Activated naive CD4-positive, alpha-beta T cell treated with anti-CD3 and anti-CD28 coated beads for 36 hours (primary cell): ENCODE measurements at regions of chr11 and their contacts with region 1.

Region 1: DNA sequence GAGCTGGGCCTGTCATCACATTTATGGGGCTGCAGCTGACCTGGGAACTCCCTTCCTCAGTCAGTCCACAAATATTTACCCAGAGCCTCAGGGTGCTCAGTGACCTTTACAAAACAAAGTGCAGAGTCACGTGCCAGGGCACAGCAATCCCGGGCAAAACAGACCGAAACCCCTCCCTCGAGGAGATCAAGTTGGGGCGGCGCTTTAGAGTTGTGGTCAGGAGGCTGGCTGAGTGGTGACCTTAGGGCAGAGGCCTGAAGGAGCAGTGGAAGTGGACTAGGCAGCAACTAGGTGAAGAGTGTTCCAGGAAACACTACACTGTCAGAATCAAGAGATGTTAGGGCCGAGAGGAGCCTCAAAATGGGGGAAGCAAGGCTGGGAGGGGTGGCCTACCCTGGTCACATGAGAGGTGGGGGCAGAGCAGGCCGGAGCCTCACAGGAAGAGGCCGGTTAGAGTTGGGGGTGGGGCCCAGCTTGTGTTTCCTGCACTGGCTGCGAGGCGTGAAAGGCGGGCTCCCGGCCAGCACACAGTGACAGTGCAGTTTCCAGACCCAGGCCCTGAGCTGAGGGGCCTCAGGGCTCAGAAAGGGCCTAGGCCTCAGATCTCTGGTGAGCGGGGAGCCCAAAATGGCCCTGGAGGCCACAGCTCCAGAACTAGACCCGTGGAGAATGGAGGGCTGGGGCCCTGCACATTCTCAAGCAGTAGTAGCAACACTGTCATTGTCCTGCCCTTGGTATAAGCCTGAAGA is 3.7 kb upstream of the NEAT1 start:
- DNase-seq: peak; percentile 97
- H3K4me3 Mint-ChIP-seq: peak overlapping the region; percentile 100
- H3K27ac Mint-ChIP-seq: peak overlapping the region; percentile 99
- H3K4me1 Mint-ChIP-seq: peaks cover 40% of the 10 kb centered on the region
- H3K27me3 Mint-ChIP-seq: peaks cover 10% of the 10 kb centered on the region

Region 2: DNA sequence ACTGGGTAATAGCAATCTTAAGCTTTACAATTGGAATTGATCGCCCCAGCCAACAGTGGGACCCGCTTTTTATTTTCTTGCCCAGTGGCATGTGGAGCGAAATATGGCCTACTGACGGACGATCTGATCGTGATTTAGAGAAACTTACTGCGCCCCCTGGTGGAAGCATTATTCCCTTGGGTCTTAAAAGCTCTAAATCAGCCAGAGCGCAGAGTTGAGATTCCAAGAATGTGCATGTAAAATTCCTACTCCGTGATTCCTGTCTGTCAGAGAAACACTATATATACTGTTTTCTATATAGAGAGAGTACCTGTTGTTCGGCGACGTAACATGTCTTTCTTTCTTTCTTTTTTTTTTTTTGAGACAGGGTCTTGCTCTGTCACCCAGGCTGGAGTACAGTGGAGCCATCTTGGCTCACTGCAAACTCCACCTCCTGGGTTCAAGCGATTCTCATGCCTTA is 88.9 kb before region 1 on chr11:
- CTCF ChIA-PET with region 1: interaction called, 4 read pairs
- intact Hi-C with region 1: loop called (anchors 5 kb)
- DNase-seq: peak; percentile 96
- H3K4me3 Mint-ChIP-seq: no peak overlapping the region
- H3K27ac Mint-ChIP-seq: no peak overlapping the region
- H3K4me1 Mint-ChIP-seq: peaks cover 11% of the 10 kb centered on the region
- H3K27me3 Mint-ChIP-seq: no peaks in the 10 kb centered on the region

Region 3: DNA sequence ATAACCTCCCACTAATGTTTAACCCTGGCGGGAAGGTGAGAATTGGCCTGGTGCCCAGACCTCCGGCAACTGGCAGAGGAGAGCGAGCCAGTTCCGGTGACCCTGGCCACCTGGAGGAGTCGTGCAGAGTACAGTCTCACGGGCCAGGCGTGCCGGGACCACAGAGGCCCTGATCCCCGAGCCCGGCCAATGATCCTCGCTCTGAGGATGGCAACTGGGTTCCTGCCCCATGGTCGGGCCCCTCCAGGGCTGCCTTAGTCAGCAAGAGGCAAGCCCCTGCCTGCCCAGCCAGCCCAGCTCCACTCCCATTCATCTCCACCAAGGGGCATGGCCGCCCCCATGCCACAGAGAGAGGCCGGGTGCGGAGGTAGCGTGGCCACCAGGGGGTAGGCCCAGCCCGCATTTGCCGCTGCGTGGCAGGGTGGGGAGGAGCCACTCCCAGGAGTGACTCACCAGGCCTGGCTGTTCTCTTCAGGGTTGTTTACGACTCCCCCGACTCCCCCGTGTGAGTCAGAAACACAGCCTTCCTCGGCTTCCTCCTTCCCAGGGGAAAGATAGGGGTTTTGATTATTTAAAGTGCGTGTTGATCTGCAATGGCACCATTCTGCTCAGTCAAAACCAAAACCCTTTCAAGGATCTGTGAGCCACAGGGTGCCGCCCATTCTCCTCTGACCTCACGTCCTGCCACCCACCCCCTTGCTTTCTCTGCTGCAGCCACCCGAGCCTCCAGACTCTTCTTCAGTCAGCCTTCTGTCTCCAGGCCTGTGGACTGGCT is 36.7 kb before region 1 on chr11 and contains the start of gene SLC25A45:
- CTCF ChIA-PET with region 1: interaction called, 24 read pairs
- intact Hi-C with region 1: loop called (anchors 1 kb)
- DNase-seq: peak; percentile 97
- H3K4me3 Mint-ChIP-seq: peak within 1 kb of the TSS; percentile 96
- H3K27ac Mint-ChIP-seq: peak within 1 kb of the TSS; percentile 100
- H3K4me1 Mint-ChIP-seq: peaks cover 48% of the 10 kb centered on the region
- H3K27me3 Mint-ChIP-seq: no peaks in the 10 kb centered on the region
- total RNA-seq, gene SLC25A45: 10.4 to 12.1 TPM

Region 4: GRCh38 chr11:65429724-65430405 is 11.0 kb after region 1 on chr11:
- CTCF ChIA-PET with region 1: interaction called, 6 read pairs
- intact Hi-C with region 1: loop called (anchors 1 kb)
- DNase-seq: peak; percentile 77
- H3K4me3 Mint-ChIP-seq: peak overlapping the region; percentile 100
- H3K27ac Mint-ChIP-seq: peak overlapping the region; percentile 99
- H3K4me1 Mint-ChIP-seq: peaks cover 76% of the 10 kb centered on the region
- H3K27me3 Mint-ChIP-seq: no peaks in the 10 kb centered on the region

Region 5: DNA sequence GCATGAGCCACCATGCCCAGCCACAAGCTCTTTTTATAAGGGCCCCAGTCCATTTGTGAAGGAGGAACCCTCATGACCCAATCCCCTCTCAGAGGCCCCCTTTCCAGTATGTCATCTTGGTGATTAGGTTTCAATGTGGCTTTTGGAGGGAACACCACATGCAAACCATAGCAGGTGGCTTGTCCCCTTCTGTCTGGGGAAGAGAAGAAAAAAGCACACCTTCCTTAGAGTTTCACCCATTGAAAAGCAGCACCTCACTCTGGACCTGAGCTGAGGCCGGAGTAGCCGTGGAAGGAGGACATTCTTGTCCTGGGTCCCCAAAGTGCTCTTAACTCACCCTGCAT is 29.2 kb after region 1 on chr11:
- CTCF ChIA-PET with region 1: no interaction called
- intact Hi-C with region 1: no loop called
- DNase-seq: no peak
- H3K4me3 Mint-ChIP-seq: no peak overlapping the region
- H3K27ac Mint-ChIP-seq: no peak overlapping the region
- H3K4me1 Mint-ChIP-seq: peaks cover 18% of the 10 kb centered on the region
- H3K27me3 Mint-ChIP-seq: no peaks in the 10 kb centered on the region

Region 6: GRCh38 chr11:65471410-65471762 is 52.5 kb after region 1 on chr11:
- CTCF ChIA-PET with region 1: interaction called, 57 read pairs
- intact Hi-C with region 1: loop called (anchors 1 kb)
- DNase-seq: peak; percentile 64
- H3K4me3 Mint-ChIP-seq: peak overlapping the region; percentile 69
- H3K27ac Mint-ChIP-seq: peak overlapping the region; percentile 95
- H3K4me1 Mint-ChIP-seq: peaks cover 44% of the 10 kb centered on the region
- H3K27me3 Mint-ChIP-seq: no peaks in the 10 kb centered on the region

Region 7: GRCh38 chr11:65506770-65507505 is 88.1 kb after region 1 on chr11:
- CTCF ChIA-PET with region 1: interaction called, 359 read pairs
- intact Hi-C with region 1: loop called (anchors 1 kb)
- DNase-seq: peak; percentile 80
- H3K4me3 Mint-ChIP-seq: no peak overlapping the region
- H3K27ac Mint-ChIP-seq: no peak overlapping the region
- H3K4me1 Mint-ChIP-seq: peaks cover 40% of the 10 kb centered on the region
- H3K27me3 Mint-ChIP-seq: no peaks in the 10 kb centered on the region

Region 8: DNA sequence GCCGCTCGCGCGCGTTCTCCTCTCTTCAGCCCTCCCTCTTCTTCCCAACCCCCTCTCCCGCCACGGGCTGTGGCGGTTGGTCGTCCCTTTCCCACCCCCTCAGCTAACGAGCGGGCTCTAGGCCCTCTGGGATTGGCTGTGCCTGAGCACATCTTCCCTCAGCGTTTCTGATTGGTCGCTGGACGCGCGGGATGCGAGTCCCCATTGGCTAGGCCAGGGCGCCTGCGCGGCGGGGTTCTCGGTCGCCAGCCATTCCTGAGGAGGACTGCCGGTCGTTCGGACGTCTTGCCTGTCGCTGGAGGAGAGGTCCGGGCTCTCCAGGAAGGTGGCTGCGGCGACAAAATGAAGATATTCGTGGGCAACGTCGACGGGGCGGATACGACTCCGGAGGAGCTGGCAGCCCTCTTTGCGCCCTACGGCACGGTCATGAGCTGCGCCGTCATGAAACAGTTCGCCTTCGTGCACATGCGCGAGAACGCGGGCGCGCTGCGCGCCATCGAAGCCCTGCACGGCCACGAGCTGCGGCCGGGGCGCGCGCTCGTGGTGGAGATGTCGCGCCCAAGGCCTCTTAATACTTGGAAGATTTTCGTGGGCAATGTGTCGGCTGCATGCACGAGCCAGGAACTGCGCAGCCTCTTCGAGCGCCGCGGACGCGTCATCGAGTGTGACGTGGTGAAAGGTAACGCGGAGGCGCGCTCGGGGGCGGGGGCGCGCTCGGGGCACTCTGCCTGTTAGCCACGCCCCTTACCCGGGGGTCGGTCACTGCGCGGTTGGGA is 1197.7 kb after region 1 on chr11 and contains the start of gene RBM14:
- CTCF ChIA-PET with region 1: no interaction called
- intact Hi-C with region 1: loop called (anchors 5 kb)
- DNase-seq: peak; percentile 99
- H3K4me3 Mint-ChIP-seq: peak within 1 kb of the TSS; percentile 98
- H3K27ac Mint-ChIP-seq: peak within 1 kb of the TSS; percentile 98
- H3K4me1 Mint-ChIP-seq: peaks cover 36% of the 10 kb centered on the region
- H3K27me3 Mint-ChIP-seq: no peaks in the 10 kb centered on the region
- total RNA-seq, gene RBM14: 160 to 173 TPM